ENCODE measurements at regions of chr5 and their contacts with region 1.

Region 1: DNA sequence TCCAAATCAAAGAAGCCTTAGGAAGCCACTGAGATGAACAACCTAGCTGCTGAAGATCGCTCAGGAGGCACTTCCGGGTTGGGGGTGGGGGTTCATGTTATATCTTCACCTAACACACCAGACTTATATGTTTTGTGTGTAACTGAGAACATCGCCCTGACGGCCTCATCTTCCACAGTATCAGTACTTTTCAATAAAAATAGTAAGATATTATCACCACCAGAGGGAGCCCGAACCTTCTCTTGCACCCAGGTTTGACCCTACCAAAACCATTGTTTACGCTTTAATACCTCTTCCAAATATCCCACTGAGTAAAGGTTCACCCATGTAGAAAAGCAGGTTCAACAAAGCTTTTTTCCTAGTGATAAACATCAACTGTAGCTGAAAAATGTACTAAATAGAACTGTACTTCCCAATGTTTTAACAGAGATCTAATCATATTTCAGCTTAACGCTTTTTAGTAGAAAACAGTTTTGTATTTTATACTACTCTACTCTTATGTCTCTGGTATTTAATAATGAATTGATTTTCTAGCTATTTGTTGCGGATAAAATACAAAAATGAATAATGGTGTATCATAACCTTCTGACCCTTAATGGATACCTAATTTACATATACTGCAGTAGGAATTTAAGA is 244.0 kb downstream of the EPB41L4A start:
- DNase-seq: peak; percentile 71
- H3K4me3 Mint-ChIP-seq: no peak overlapping the region
- H3K27ac Mint-ChIP-seq: no peak overlapping the region
- H3K4me1 Mint-ChIP-seq: no peaks in the 10 kb centered on the region
- H3K27me3 Mint-ChIP-seq: no peaks in the 10 kb centered on the region
- CTCF ChIP-seq: peak; percentile 79

Region 2: DNA sequence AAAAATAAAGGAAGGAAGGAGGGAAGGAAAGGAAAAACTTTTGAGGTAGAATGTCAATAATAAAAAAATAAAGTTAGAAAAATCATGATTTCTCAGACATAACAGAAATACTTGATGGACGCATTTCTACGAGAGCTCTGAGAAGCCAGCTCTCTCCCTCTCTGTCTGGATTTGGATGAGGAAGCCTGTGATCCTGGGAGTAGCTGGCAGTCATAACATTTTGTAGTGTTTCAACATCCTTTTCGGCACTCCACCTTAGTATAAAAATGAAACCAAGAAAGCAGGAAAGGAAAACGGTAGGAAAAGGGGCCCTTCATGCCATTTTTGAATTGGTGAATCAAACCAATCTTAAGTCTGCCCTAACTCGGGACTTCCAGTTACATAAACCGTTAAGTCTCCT is 77.3 kb before region 1 on chr5:
- CTCF ChIA-PET with region 1: no interaction called
- POLR2A ChIA-PET with region 1: no interaction called
- intact Hi-C with region 1: no loop called
- DNase-seq: peak; percentile 13
- H3K4me3 Mint-ChIP-seq: peak overlapping the region; percentile 47
- H3K27ac Mint-ChIP-seq: peak overlapping the region; percentile 42
- H3K4me1 Mint-ChIP-seq: no peaks in the 10 kb centered on the region
- H3K27me3 Mint-ChIP-seq: no peaks in the 10 kb centered on the region
- CTCF ChIP-seq: no peak

Region 3: GRCh38 chr5:112160652-112161391 is 14.3 kb before region 1 on chr5:
- CTCF ChIA-PET with region 1: interaction called, 67 read pairs
- POLR2A ChIA-PET with region 1: interaction called, 11 read pairs
- intact Hi-C with region 1: no loop called
- DNase-seq: peak; percentile 90
- H3K4me3 Mint-ChIP-seq: peak overlapping the region; percentile 95
- H3K27ac Mint-ChIP-seq: peak overlapping the region; percentile 92
- H3K4me1 Mint-ChIP-seq: peaks cover 24% of the 10 kb centered on the region
- H3K27me3 Mint-ChIP-seq: no peaks in the 10 kb centered on the region
- CTCF ChIP-seq: peak; percentile 97

Region 4: DNA sequence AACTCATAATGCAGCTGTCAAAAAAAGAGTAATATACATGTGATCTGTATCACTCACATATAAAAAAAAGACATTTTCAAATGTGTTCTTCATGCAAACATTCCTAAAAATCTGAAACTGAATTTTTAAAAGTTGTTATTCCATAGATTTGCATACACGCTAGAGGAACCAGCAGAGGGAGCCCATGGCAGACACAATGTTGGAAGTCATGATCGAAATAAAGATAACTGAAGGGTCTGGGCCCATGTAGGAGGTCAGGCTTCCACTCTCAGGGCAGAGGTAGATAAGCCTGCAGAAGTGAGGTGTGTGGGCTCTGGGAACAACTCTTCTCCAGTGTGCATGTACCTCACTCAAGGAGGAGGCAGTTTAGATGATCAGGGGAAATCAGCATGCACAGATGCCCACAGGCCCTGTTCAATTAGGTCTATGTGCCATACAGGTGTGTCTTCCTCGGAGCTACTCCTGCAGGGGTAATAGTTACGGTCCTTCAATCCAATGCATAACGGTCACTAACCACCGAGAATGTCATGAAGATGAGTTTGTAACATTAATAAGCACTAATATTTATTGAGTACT is 35.4 kb after region 1 on chr5:
- CTCF ChIA-PET with region 1: interaction called, 13 read pairs
- POLR2A ChIA-PET with region 1: no interaction called
- intact Hi-C with region 1: loop called (anchors 1 kb)
- DNase-seq: peak; percentile 63
- H3K4me3 Mint-ChIP-seq: no peak overlapping the region
- H3K27ac Mint-ChIP-seq: no peak overlapping the region
- H3K4me1 Mint-ChIP-seq: peaks cover 6% of the 10 kb centered on the region
- H3K27me3 Mint-ChIP-seq: no peaks in the 10 kb centered on the region
- CTCF ChIP-seq: peak; percentile 69

Region 5: DNA sequence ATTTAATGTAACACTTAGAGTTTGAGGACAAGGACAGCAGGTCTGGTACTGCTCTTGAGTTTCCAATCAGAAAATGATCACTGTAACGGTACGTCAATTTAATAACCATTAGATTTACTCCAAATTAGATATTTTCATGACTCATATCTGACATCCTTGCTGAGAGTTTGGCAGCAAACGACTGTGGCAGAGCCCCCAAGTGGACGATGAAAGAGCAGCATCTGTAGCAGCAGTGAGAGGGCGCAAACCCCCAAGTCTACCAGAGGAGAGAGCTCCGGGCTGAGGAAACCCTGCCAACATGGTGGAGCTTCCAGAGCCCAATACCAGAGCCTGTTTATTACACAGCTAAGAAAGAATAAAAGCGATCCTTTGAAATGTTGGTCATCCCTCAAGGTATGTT is 317.2 kb after region 1 on chr5:
- CTCF ChIA-PET with region 1: interaction called, 28 read pairs
- POLR2A ChIA-PET with region 1: no interaction called
- intact Hi-C with region 1: loop called (anchors 1 kb)
- DNase-seq: peak; percentile 79
- H3K4me3 Mint-ChIP-seq: no peak overlapping the region
- H3K27ac Mint-ChIP-seq: no peak overlapping the region
- H3K4me1 Mint-ChIP-seq: no peaks in the 10 kb centered on the region
- H3K27me3 Mint-ChIP-seq: no peaks in the 10 kb centered on the region
- CTCF ChIP-seq: peak; percentile 50

Region 6: GRCh38 chr5:112597831-112598230 is 422.8 kb after region 1 on chr5:
- CTCF ChIA-PET with region 1: no interaction called
- POLR2A ChIA-PET with region 1: no interaction called
- intact Hi-C with region 1: no loop called
- DNase-seq: no peak
- H3K4me3 Mint-ChIP-seq: no peak overlapping the region
- H3K27ac Mint-ChIP-seq: no peak overlapping the region
- H3K4me1 Mint-ChIP-seq: no peaks in the 10 kb centered on the region
- H3K27me3 Mint-ChIP-seq: peaks cover 70% of the 10 kb centered on the region
- CTCF ChIP-seq: no peak

Region 7: DNA sequence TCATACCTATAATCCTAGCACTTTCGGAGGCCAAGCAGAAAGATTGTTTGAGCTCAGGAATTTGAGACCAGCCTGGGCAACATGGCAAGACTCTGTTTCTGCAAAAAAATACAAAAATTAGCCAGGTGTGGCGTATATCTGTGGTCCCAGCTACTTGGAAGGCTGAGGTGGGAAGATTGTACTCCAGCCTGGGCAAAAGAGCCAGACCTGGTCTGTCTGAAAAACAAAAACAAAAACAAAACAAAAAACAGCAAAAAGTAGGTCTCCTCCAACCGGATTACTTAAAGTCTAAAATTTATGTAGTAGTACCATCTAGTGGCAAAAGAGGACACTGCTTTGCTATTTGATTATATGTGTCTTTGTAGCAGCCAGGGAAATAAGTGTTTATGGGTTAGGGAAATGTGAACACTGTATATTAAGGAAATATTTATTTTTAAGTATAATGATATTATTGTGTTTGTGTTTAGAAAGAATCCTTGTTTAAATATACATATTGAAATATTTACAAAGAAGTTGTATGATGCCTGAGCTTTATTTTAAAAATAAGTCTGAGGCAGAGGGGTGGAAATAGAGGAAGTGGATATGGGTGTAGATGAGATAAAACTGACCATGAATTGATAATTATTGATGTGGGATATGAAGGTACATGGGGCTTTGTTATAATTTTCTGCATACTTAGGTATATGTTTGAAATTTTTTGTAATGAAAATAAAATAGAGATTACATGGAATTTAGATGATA is 582.6 kb after region 1 on chr5:
- CTCF ChIA-PET with region 1: interaction called, 13 read pairs
- POLR2A ChIA-PET with region 1: no interaction called
- intact Hi-C with region 1: no loop called
- DNase-seq: peak; percentile 61
- H3K4me3 Mint-ChIP-seq: no peak overlapping the region
- H3K27ac Mint-ChIP-seq: no peak overlapping the region
- H3K4me1 Mint-ChIP-seq: peaks cover 21% of the 10 kb centered on the region
- H3K27me3 Mint-ChIP-seq: no peaks in the 10 kb centered on the region
- CTCF ChIP-seq: peak; percentile 68

Region 8: DNA sequence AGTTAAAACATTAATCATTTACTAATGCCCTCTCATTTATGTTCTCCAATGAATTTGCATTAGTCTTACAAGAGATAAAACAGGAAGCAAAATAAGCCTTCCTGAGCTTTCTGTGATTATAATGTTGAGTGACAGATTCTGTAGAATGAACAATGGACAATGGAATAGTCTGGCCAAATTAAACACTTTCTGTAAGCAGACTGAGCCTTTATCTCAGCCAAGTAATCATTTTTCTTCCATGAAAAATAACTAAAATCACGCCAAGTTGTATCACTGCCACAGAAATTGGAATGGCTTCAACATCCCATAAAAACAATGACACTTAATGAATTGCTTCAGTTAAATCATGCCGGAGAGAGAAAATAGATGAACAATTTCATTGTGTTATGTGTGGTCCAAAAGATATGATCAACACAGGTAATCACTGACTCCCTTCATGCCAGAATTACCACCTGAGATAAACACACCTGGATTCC is 1196.7 kb after region 1 on chr5:
- CTCF ChIA-PET with region 1: no interaction called
- POLR2A ChIA-PET with region 1: no interaction called
- intact Hi-C with region 1: no loop called
- DNase-seq: no peak
- H3K4me3 Mint-ChIP-seq: no peak overlapping the region
- H3K27ac Mint-ChIP-seq: no peak overlapping the region
- H3K4me1 Mint-ChIP-seq: peaks cover 4% of the 10 kb centered on the region
- H3K27me3 Mint-ChIP-seq: no peaks in the 10 kb centered on the region
- CTCF ChIP-seq: no peak